Tibial artery (tissue), 4 donors: ENCODE measurements at regions of chr22 and their contacts with region 1.

Region 1: DNA sequence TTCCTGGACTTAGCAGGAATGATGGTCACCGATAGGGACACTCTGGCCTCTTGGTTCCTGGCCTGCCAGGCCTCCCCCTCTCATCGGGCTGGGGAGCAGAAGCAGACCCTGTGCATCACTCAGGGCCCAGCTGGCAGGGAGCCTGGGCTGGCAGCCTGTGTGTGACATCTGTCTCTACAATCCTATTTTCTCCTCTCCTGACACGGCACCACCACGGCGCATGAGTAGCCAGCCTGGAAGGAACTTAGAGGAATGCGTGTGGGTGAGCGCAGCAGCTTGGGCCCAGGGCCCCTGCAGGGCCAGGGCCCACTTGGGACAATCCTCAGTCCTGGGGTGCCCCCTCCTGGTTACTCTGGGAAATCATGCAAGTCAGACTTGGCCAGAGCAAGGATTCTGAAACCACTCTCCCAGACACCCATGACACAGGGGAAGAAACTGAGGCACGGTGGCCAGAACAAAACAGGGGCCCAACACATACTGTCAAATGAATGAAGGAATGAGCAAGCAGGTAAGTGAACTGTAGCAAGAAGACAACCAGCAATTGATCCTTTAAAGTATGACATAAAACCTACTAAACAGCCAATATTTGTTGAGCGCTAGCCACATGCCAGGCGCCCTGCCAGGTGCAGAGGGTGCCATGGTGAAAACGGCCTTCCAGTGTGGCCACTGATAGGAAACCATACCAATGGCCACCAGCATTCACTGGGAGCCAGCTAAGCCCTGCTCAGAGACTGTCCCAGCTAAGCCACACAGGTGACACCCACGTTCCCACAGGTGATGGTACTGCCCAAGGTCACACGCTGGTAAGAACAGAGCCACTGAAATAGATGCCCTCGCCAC is 13.3 kb downstream of the RSPH14 start:
- DNase-seq: peak; percentile 55 to 75
- H3K4me3 ChIP-seq: no peak overlapping the region
- H3K27ac ChIP-seq: no peak overlapping the region
- H3K4me1 ChIP-seq: no peaks in the 10 kb centered on the region
- H3K27me3 ChIP-seq: no peaks in the 10 kb centered on the region
- CTCF ChIP-seq: peak; percentile 74 to 85

Region 2: GRCh38 chr22:22959147-22959827 is 169.2 kb before region 1 on chr22:
- intact Hi-C with region 1: loop called (anchors 2 kb)
- DNase-seq: peak in 1 of 2 donors; percentile 51
- H3K4me3 ChIP-seq: no peak overlapping the region
- H3K27ac ChIP-seq: no peak overlapping the region
- H3K4me1 ChIP-seq: no peaks in the 10 kb centered on the region
- H3K27me3 ChIP-seq: peaks cover 0 to 30% of the 10 kb centered on the region in 2 donors
- CTCF ChIP-seq: peak; percentile 67 to 79

Region 3: DNA sequence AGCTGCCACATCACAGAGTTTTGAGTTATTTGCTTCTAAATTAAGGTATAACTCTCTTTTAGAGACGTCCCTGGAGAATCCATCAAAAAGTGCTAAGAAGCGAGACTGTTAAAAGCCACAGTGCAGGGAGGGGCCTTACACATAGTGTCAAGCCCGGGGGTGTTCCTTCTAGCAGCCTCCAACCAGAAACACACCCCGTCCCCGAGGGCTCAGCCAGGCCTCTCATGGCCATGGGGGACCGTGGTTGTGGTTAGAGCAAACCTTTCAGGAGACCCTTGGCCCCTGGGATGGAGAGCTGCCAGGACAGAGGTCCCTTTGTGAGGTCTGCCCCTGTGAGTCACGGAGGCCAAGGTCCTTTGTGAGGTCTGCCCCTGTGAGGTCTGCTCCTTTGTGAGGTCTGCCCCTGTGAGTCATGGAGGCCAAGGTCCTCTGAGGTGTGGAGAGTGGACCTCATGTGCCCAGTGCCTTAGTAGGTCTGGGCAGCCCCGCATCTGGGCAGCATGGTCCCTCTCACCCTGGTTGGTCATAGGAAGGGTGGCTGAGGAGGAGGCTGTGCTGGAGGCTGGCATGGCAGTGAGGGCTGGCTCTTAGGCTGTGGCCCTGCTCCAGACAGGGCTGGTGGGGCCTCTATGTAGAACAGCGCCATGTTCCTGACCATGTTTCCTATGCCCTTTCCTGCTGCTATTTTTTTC is 52.8 kb before region 1 on chr22:
- intact Hi-C with region 1: no loop called
- DNase-seq: no peak
- H3K4me3 ChIP-seq: no peak overlapping the region
- H3K27ac ChIP-seq: no peak overlapping the region
- H3K4me1 ChIP-seq: peaks cover 0 to 7% (median 5%) of the 10 kb centered on the region in 4 donors
- H3K27me3 ChIP-seq: no peaks in the 10 kb centered on the region
- CTCF ChIP-seq: no peak